Activated CD8-positive, alpha-beta memory T cell treated with anti-CD3 and anti-CD28 coated beads, Interleukin-2, amount 10 ng/mL, durations not matched to agents 7 days and 5 days (primary cell): ENCODE measurements at regions of chr20 and their contacts with region 1.

Region 1: DNA sequence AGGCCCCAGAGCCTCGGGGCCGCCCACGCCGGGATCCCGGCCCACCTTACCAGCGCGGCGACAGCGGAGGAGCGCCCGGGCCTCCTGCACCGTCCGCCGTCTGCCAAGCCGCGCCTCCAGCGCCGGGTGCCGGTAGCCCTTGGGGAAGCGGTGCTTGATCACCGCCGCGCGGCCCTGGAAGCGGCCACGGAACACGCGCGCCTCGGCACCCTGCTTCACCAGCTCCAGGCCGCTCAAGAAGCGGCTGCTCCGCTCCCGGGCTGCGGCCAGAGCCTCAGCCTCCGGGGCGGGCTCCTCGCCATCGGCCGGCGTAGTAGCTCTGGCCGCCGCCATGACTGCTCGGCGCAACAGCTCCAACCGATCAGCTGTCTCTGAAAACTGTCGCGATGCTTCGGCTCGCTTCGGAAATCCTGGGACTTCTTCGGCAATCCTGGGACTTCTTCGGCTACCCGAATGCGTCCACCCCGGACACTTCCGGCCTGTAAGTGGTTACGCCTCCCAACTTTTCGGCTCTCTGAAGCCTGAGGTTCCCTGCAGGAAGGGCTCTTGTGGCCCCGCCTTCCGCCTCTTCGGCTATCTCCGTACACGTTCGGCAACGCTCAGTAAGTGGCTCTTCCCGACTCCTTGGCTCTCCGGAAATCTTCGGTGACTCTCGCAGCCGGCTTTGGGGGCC is at the start of gene TP53RK:
- DNase-seq: peak; percentile 99
- ATAC-seq: peak; percentile 98
- H3K4me3 Mint-ChIP-seq: peak within 1 kb of the TSS; percentile 95
- H3K27ac Mint-ChIP-seq: peak within 1 kb of the TSS; percentile 93
- H3K4me1 Mint-ChIP-seq: peaks cover 38% of the 10 kb centered on the region
- H3K27me3 Mint-ChIP-seq: no peaks in the 10 kb centered on the region
- total RNA-seq, gene TP53RK: 14.8 to 20.9 TPM

Region 2: DNA sequence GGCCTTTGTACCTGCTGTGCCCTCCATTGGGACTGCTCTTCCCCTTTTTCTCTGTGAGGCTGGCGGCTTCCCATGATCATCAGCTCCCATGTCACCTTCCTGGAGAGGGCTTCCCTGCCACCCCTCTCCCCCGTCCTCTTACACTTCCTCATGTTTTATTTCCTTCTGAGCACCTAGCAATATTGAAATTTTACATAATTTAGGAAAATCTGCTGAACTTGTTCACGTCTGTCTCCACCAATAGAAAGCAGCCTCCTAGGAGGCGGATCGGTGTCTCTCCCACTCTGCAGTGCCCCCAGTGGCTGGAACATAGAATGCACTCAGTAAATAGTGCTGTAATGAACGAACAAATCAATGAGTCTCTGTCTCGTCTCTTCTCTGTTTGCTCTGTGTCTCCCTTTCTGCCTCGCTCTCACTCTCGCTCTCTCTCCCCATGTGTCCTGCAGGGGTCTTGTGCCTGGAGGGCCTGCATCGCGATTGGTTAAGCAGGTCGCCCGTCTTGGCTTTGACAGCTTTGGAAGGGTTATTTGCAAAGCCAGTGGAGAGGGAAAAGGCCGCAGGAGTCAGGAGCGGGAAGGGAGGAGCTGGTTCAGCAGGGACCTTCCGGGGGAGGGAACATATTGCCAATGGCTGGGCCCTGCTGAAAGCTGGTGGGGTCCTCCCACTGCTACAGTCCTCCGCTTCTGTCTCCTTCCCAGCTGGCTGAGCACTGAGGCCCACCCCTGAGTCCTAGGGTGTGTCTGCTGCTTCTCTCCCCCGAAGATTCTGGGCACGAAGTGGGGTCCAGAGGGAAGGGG is 126.6 kb before region 1 on chr20:
- CTCF ChIA-PET with region 1: interaction called, 22 read pairs
- DNase-seq: peak; percentile 81
- ATAC-seq: peak; percentile 79
- H3K4me3 Mint-ChIP-seq: no peak overlapping the region
- H3K27ac Mint-ChIP-seq: no peak overlapping the region
- H3K4me1 Mint-ChIP-seq: peaks cover 29% of the 10 kb centered on the region
- H3K27me3 Mint-ChIP-seq: peaks cover 5% of the 10 kb centered on the region